Calu3 (cell line): ENCODE measurements at regions of chr10 and their contacts with region 1.

Region 1: DNA sequence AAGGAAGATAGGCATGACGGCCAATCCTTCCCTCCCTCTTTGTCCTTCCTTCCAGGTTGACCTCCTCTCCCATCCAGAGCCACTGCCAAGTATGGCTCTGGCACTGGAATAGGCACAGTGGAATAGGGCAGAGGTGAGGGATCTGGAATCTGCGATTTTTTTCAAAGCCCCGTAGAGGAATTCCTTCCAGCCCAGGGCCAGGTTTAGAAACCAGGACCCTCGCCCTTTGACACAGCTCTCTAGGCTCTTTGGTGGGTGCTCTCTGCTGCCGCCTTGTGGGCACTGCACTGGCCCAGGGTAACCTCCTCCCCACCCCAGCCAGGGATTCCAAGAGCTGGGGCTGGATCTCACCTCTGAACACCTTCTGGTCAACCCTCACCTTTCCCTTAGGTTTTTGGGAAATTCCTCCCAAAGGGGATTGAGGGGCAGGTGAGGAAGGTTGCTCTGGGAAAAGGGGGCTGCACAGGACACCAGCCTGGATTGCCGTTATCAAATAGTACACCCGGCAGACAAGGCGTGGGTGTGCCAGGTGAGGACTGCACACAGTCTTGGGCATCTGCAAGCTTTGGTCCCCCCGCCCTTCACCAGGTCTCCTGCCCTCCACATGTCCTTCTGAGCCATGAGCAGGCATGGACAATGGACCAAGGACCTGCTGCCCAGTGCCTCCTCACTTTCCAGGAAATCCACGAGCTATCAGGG is 22.8 kb downstream of the C10orf105 start:
- DNase-seq: peak; percentile 81
- H3K4me3 Mint-ChIP-seq: no peak overlapping the region
- H3K27ac Mint-ChIP-seq: no peak overlapping the region
- H3K4me1 Mint-ChIP-seq: peaks cover 8% of the 10 kb centered on the region
- H3K27me3 Mint-ChIP-seq: peaks cover under 1% of the 10 kb centered on the region
- CTCF ChIP-seq: peak; percentile 94

Region 2: GRCh38 chr10:71314028-71314693 is 382.6 kb before region 1 on chr10:
- CTCF ChIA-PET with region 1: interaction called, 9 read pairs
- intact Hi-C with region 1: loop called (anchors 5 kb)
- DNase-seq: peak; percentile 62
- H3K4me3 Mint-ChIP-seq: no peak overlapping the region
- H3K27ac Mint-ChIP-seq: no peak overlapping the region
- H3K4me1 Mint-ChIP-seq: peaks cover 10% of the 10 kb centered on the region
- H3K27me3 Mint-ChIP-seq: peaks cover 43% of the 10 kb centered on the region
- CTCF ChIP-seq: peak; percentile 93

Region 3: DNA sequence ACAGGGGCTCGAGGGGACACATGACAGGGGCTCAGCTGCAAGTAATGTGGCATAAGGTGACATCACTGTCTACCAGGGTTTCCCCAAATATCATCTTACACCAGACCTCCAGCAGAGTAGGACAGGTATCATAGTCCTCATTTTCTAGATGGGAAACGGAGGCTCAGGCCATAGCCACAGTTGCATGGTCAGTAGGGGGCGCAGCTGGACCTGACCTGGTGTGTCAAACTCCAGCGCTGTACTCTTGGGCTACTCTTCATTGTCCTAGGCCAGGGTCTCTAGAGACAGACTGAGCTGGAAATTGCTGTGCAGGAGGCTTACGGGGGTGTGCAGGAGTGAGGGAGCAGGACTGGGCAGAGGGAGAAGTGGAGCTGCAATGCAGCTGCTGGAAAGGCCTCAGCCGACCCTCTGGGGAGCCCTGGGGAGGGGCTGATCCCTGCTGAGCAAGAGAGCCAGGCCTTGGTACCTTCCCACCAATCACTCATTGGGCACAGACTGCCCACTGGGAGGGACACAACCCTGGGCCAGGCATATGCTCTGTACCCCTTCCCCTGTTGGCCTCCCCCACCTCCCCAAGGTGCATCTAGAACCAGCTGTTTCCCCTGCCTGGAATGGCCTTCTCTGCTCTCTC is 210.2 kb before region 1 on chr10:
- CTCF ChIA-PET with region 1: no interaction called
- intact Hi-C with region 1: loop called (anchors 2 kb)
- DNase-seq: peak; percentile 83
- H3K4me3 Mint-ChIP-seq: no peak overlapping the region
- H3K27ac Mint-ChIP-seq: no peak overlapping the region
- H3K4me1 Mint-ChIP-seq: no peaks in the 10 kb centered on the region
- H3K27me3 Mint-ChIP-seq: peaks cover 96% of the 10 kb centered on the region
- CTCF ChIP-seq: peak; percentile 71

Region 4: GRCh38 chr10:71708301-71708703 is 11.5 kb after region 1 on chr10:
- CTCF ChIA-PET with region 1: interaction called, 31 read pairs
- intact Hi-C with region 1: no loop called
- DNase-seq: peak; percentile 73
- H3K4me3 Mint-ChIP-seq: no peak overlapping the region
- H3K27ac Mint-ChIP-seq: no peak overlapping the region
- H3K4me1 Mint-ChIP-seq: peaks cover 4% of the 10 kb centered on the region
- H3K27me3 Mint-ChIP-seq: peaks cover 2% of the 10 kb centered on the region
- CTCF ChIP-seq: peak; percentile 93

Region 5: DNA sequence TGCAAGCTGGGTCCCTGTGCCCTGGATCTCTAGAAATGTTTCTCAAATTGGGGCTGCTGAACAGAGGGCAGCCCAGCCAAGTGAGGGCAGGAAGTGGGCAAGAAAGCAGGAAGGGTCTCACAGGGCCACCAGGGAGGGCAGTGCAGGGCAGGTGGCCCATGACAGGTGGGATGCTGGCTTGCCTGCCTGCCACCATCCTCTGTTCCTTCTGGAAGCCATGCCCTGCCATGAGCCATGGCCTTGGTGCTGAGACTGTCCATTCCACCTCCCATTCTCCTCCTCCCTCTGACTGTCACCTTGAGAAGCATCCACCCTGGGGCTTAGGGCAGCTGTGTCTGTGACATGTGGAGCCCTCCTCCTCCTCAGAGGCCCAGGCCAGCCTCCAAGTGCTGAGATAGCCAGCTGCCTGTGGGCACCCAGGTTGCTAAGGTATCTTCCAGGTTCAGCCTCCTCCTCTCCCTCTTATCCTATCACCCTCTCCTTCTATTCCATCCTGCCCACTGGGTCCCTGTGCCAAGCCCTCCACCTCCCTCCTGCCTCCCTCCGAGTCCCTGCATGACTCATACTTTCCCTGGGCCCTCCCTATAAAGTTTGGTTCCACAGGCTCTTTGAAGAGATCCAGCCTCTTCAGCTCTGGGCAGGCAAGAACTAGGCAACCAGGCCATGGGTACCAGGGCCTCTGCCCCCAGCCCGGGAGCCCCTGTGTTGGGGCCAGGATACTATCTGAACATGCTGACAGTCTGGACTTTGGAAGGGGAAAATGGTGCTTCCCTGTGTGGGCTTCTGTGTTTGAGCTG is 75.2 kb after region 1 on chr10:
- CTCF ChIA-PET with region 1: interaction called, 19 read pairs
- intact Hi-C with region 1: no loop called
- DNase-seq: peak; percentile 60
- H3K4me3 Mint-ChIP-seq: peak overlapping the region; percentile 87
- H3K27ac Mint-ChIP-seq: no peak overlapping the region
- H3K4me1 Mint-ChIP-seq: peaks cover 47% of the 10 kb centered on the region
- H3K27me3 Mint-ChIP-seq: no peaks in the 10 kb centered on the region
- CTCF ChIP-seq: no peak

Region 6: DNA sequence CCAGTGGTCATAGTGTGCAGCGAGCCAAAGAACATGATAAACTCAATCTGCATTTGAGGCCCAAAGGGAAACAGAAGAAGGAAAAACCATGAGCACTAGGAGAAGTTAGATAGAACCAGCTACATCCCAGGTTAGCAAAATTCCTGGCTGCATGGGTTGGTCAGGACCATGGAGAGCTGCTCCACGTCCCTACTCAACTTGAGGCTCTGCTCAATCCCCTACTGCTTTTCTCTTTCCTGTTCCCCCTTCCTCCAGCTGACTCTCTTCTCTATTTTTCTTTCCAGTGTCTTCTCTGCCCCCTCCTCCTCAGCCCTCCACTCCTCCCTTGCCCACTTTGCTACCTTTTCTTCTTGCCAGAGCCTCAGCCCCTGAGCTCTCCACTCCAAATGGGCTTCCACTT is 98.5 kb after region 1 on chr10:
- CTCF ChIA-PET with region 1: no interaction called
- intact Hi-C with region 1: no loop called
- DNase-seq: peak; percentile 49
- H3K4me3 Mint-ChIP-seq: no peak overlapping the region
- H3K27ac Mint-ChIP-seq: no peak overlapping the region
- H3K4me1 Mint-ChIP-seq: no peaks in the 10 kb centered on the region
- H3K27me3 Mint-ChIP-seq: peaks cover 59% of the 10 kb centered on the region
- CTCF ChIP-seq: no peak

Region 7: GRCh38 chr10:71812016-71812912 is 115.5 kb after region 1 on chr10:
- CTCF ChIA-PET with region 1: interaction called, 10 read pairs
- intact Hi-C with region 1: loop called (anchors 10 kb)
- DNase-seq: peak; percentile 92
- H3K4me3 Mint-ChIP-seq: no peak overlapping the region
- H3K27ac Mint-ChIP-seq: no peak overlapping the region
- H3K4me1 Mint-ChIP-seq: no peaks in the 10 kb centered on the region
- H3K27me3 Mint-ChIP-seq: peaks cover 14% of the 10 kb centered on the region
- CTCF ChIP-seq: peak; percentile 97